ENCODE measurements at regions of chr1 and their contacts with region 1.

Region 1: DNA sequence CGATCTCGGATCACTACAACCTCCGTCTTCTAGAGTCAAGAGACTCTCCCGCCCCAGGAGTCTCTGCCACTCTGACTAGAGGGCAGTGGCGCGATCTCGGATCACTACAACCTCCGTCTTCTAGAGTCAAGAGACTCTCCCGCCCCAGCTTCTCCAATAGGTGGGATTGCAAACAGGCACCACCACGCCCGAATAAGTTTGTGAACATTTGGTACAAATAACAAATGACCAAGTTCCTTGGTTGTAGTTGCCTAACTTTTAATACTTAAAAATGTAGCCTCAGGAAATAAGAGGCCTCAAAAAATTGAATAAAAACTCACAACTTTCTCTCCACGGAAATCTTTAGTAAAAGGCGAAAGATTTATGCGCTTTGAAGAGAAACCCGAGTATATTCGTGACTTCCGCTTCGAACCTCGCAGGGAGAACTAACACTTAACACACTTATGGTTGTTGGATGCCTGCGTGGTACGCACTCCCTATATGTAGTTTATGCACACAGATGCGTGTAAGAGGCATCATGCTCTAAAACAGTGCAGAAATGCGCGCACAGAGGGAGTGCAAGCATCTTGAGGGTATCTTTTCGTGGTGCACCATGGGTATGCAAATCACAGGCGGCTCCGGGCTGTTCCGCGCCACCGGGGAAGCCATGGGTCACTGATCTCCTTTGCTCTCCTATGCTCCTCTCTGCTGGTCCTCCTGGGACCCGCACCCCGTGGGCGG is 11.4 kb downstream of the BTBD19 start:
- DNase-seq: peak; percentile 90
- ATAC-seq: peak; percentile 89
- H3K4me3 ChIP-seq: peak overlapping the region; percentile 57 to 80 (median 64)
- H3K27ac ChIP-seq: peak overlapping the region; percentile 100
- H3K4me1 ChIP-seq: peaks cover 30% of the 10 kb centered on the region
- H3K27me3 ChIP-seq: no peaks in the 10 kb centered on the region
- CTCF ChIP-seq: peak; percentile 36; the same call in 1 of the 2 replicates
- EP300 ChIP-seq: peak; percentile 64 to 75; a peak in 2 of 4 replicates
- POLR2A ChIP-seq: peak in 1 of 2 experiments; percentile 100; a peak in 2 of 4 replicates
- RAD21 ChIP-seq: peak; percentile 38

Region 2: GRCh38 chr1:44786138-44786840 is 33.5 kb before region 1 on chr1:
- CTCF ChIA-PET with region 1: no interaction called
- POLR2A ChIA-PET with region 1: interaction called, 33 read pairs
- in situ Hi-C with region 1: no loop called
- intact Hi-C with region 1: loop called (anchors 5 kb)
- DNase-seq: peak; percentile 60
- ATAC-seq: peak; percentile 23
- H3K4me3 ChIP-seq: peak overlapping the region in 2 of 3 experiments; percentile 34 to 79; a peak in 3 of 6 replicates
- H3K27ac ChIP-seq: no peak overlapping the region
- H3K4me1 ChIP-seq: peaks cover 61% of the 10 kb centered on the region
- H3K27me3 ChIP-seq: peaks cover 3 to 17% of the 10 kb centered on the region in 2 experiments; a peak in 2 of 5 replicates
- CTCF ChIP-seq: peak; percentile 91
- EP300 ChIP-seq: peak; percentile 9 to 62; a peak in 1 of 4 replicates
- POLR2A ChIP-seq: no peak; a peak in 1 of 4 replicates
- RAD21 ChIP-seq: peak; percentile 87

Region 3: DNA sequence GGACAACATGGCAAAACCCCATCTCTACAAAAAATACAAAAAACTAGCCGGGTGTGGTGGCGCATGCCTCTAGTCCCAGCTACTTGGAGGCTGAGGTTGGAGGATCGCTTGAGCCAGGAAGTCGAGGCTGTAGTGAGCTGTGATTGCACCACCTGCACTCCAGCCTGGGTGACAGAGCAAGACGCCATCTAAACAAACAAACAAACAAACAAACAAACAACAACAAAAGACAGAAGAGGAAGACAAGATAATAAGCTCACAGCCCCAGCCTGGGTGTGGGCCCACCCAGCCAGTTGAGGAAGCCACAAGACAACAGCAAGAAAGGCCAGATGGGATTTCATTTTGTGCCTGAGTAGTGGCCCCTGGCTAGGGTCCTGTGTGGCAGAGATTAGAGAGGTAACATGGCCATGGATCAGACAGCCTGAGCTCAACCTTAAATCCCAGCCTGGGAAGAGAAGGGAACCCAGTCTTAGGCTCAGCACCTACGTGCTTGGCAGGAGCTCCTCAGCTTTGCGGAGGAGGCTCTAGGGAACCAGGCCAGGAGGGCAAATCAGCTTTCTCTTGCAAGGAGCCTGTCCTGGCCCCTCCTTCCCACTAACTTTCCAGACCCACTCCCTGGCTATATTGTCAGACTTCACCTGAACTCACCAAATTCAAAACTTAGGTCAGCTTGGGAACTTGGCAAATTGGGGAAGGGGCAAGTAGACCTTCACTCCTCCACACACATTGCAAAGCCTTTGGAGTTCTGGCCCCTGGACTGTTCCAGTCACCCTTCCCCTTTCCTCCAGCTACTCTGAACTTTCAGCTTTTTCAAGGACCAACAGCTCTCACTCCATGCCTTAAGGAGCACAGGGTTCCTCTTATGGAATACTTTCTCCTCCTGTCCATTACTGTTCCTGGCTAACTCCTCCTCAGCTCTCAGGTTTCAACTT is 26.7 kb before region 1 on chr1:
- CTCF ChIA-PET with region 1: no interaction called
- POLR2A ChIA-PET with region 1: interaction called, 168 read pairs
- in situ Hi-C with region 1: no loop called
- intact Hi-C with region 1: no loop called
- DNase-seq: no peak
- ATAC-seq: peak; percentile 6; the same call in 1 of the 3 replicates
- H3K4me3 ChIP-seq: no peak overlapping the region
- H3K27ac ChIP-seq: no peak overlapping the region
- H3K4me1 ChIP-seq: peaks cover 32% of the 10 kb centered on the region
- H3K27me3 ChIP-seq: peaks cover 0 to 8% of the 10 kb centered on the region in 2 experiments; a peak in 2 of 5 replicates
- CTCF ChIP-seq: no peak
- EP300 ChIP-seq: no peak
- POLR2A ChIP-seq: no peak
- RAD21 ChIP-seq: no peak